ENCODE measurements at regions of chr1 and their contacts with region 1.

Region 1: DNA sequence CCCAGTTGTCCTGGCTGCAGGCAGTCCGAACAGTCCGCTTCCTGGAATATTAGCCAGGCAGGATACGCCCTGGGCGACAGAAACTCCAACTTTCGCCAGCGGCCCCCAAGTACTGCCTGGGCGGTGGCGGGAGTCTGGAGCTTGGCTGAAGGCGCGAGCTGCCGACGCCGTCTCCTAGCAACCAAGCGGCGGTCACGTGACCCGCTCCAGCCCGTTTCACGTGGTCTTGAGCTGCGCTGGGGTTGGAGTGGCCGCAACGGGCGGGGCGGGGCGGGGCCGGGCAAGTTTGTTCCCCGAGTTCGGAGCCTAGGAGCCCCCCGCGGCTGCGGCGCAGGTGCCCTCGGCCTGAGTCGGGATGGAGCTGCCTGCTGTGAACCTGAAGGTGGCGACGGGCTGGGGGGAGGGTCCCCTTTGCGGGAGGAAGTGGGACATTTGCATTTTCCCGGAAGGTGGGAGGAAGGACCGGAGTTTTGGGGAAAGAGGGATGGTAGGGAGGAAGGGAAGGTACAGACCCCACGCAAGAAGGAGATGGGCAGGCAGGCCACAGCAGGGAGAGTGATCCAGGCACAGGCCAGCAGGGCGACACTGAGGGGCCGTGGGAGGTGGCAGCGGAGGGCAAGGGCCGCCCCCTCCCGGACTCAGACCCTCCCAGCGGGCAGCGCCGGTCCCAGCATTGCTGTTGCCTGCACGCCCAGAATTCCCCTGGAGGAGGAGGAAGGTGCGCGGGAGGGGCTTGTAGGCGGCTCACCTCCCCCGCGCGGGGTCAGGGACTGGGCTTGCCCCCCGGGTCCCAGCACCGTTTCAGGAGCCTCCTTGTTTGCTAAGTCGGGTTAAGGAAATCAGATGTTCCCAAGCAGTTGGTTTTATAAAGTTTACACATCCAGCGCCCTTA is at the start of gene AGTRAP:
- DNase-seq: peak; percentile 99
- ATAC-seq: peak; percentile 92
- total RNA-seq, gene AGTRAP: 32.8 TPM

Region 2: DNA sequence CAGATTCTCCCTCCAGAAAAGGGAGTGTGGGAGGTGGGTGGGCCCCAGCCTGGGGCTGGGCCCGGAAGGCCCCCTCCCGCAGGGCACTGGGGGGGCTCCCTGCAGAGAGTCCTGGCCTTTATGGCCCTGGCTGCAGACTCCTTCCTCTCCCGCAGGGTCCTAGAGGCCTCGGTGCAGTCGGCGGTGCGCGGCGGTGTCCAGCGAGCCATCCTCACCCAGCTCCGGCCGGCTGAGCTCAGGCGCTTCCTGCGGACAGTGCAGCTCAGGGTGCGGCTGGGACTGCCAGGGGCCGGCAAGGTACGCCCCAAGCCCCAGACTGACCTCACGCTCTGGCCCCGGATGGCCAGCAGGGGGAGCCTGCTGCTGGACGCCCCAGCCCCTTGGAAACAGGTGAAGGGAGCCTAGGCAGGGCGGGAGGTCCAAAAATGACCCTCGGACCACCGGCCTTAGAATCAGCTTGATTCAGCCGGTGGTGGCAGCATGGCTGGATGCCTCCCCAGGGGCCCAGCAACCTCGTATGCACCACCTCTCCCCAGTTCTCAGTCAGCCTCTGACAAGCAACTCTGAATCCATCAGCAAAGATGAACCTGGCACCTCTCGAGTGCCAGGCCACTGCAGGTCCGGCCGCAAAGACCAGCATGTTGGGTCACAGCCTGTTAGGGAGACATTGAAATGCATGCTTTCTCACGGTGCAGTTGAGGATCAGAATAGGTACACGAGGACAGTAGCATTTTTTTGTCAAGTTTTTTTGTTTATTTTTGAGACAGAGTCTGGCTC is 49.1 kb after region 1 on chr1:
- intact Hi-C with region 1: loop called (anchors 10 kb)
- DNase-seq: peak; percentile 86
- ATAC-seq: peak; percentile 54